Posterior cingulate gyrus (tissue), 11 donors: ENCODE measurements at regions of chr18 and their contacts with region 1.

Region 1: DNA sequence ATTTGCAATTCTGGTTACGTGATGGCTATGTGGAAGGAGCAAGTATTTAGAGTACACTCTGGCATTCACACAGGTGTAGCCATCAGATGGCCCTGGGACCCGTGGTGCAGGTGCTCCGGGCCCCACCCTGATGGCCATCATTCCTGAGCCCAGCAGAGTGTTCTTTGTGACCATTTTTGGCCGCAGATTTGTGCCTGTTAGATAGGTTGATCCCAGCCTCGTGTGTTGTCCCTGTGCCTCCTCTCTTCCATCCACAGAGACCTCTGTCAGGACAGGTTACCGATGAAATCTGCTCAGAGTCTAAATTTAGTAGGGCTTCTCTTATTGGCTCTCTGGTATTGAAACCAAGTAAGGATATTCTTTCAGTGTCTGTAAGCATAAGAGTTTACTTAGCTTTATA is 33.9 kb downstream of the MAPRE2 start:
- DNase-seq: peak in 1 of 10 donors; percentile 46

Region 2: GRCh38 chr18:34901299-34901698 is 173.8 kb before region 1 on chr18:
- intact Hi-C with region 1: no loop called
- DNase-seq: no peak

Region 3: GRCh38 chr18:35049111-35050027 is 25.8 kb before region 1 on chr18:
- intact Hi-C with region 1: loop called (anchors 1 kb)
- DNase-seq: no peak